Mammary epithelial cell (primary cell): ENCODE measurements at regions of chr15 and their contacts with region 1.

Region 1: GRCh38 chr15:67097930-67098740 is 32.7 kb downstream of the SMAD3 start:
- DNase-seq: peak; percentile 67
- H3K4me3 ChIP-seq: no peak overlapping the region
- H3K27ac ChIP-seq: peak overlapping the region; percentile 52
- H3K4me1 ChIP-seq: peaks cover 43% of the 10 kb centered on the region
- H3K27me3 ChIP-seq: no peaks in the 10 kb centered on the region
- CTCF ChIP-seq: no peak

Region 2: GRCh38 chr15:67181191-67181645 is 83.1 kb after region 1 on chr15:
- CTCF ChIA-PET with region 1: no interaction called
- dilution Hi-C with region 1: loop called (anchors 5 kb)
- in situ Hi-C with region 1: no loop called
- intact Hi-C with region 1: loop called (anchors 5 kb)
- DNase-seq: no peak
- H3K4me3 ChIP-seq: no peak overlapping the region
- H3K27ac ChIP-seq: no peak overlapping the region
- H3K4me1 ChIP-seq: peaks cover 26% of the 10 kb centered on the region
- H3K27me3 ChIP-seq: no peaks in the 10 kb centered on the region
- CTCF ChIP-seq: peak in 1 of 2 donors; percentile 14